ENCODE measurements at regions of chr12 and their contacts with region 1.

Region 1: GRCh38 chr12:58268069-58268468 is 326.7 kb downstream of the ATP23 start:
- DNase-seq: no peak

Region 2: GRCh38 chr12:58176296-58176869 is 91.7 kb before region 1 on chr12:
- CTCF ChIA-PET with region 1: interaction called, 10 read pairs
- POLR2A ChIA-PET with region 1: no interaction called
- DNase-seq: peak; percentile 58

Measured in HEK293T (cell line).